Activated CD4-positive, alpha-beta T cell treated with anti-CD3 and anti-CD28 coated beads, Interleukin-2, amount 10 ng/mL, durations not matched to agents 24 days and 14 days (primary cell): ENCODE measurements at regions of chr6 and their contacts with region 1.

Region 1: GRCh38 chr6:42745707-42746462 is at the start of gene TBCC:
- DNase-seq: peak; percentile 97
- H3K4me3 Mint-ChIP-seq: peak within 1 kb of the TSS; percentile 92
- H3K27ac Mint-ChIP-seq: peak within 1 kb of the TSS; percentile 100
- H3K4me1 Mint-ChIP-seq: peaks cover 22% of the 10 kb centered on the region
- H3K27me3 Mint-ChIP-seq: no peaks in the 10 kb centered on the region
- total RNA-seq, gene TBCC: 18.4 TPM in 2 replicates

Region 2: GRCh38 chr6:42158011-42158410 is 587.9 kb before region 1 on chr6:
- intact Hi-C with region 1: no loop called
- DNase-seq: no peak
- H3K4me3 Mint-ChIP-seq: no peak overlapping the region
- H3K27ac Mint-ChIP-seq: no peak overlapping the region
- H3K4me1 Mint-ChIP-seq: no peaks in the 10 kb centered on the region
- H3K27me3 Mint-ChIP-seq: peaks cover 11% of the 10 kb centered on the region

Region 3: DNA sequence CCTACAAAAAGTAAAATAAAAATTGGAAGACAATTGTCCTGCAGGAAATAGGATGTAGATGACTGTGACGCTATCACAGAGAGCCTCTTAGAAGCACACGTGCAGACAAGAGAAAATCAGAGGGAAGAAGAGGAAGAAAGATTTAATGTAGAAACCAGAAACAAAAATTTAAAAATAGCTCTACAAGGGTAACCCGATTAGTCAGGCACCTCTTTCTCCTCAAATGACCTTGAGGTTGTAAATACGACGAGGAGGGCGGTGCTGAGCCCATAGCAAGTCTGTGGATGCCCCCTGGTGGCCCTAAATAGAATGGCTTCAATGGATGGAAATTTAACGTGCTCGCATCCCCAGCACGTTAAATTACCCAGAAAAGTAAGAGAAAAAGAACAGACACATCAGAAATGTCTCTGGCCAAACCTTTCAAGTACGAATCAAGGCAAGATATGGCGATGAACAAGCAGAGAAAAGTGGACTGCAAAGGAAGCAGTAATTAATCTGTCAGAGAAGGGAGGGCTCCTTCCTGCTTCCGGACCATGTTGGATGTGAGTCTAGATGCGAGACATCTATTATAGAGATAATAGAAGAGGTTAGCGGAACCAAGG is 19.3 kb before region 1 on chr6:
- intact Hi-C with region 1: loop called (anchors 1 kb)
- DNase-seq: peak; percentile 91
- H3K4me3 Mint-ChIP-seq: peak overlapping the region; percentile 84
- H3K27ac Mint-ChIP-seq: peak overlapping the region; percentile 97
- H3K4me1 Mint-ChIP-seq: peaks cover 14% of the 10 kb centered on the region
- H3K27me3 Mint-ChIP-seq: no peaks in the 10 kb centered on the region

Region 4: DNA sequence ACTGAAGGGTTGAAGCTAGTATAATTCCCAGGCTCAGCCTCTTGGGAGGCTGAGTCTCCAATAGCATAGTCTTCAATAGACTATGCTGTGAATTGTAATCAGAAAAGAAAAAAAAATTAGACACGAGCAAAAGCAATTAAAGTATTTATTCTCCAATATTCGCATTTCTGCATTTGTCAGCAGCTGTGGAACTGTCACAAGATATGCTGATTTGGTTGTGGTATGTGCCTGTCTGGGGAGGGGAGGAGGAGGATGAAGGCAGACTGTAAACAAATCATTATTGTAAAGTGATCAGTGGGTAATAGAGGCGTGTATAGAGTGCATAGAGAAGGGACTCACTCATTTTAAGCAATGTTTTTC is 25.8 kb after region 1 on chr6:
- intact Hi-C with region 1: loop called (anchors 1 kb)
- DNase-seq: peak; percentile 77
- H3K4me3 Mint-ChIP-seq: peak overlapping the region; percentile 83
- H3K27ac Mint-ChIP-seq: peak overlapping the region; percentile 99
- H3K4me1 Mint-ChIP-seq: peaks cover 55% of the 10 kb centered on the region
- H3K27me3 Mint-ChIP-seq: no peaks in the 10 kb centered on the region

Region 5: GRCh38 chr6:42782622-42783176 is 36.8 kb after region 1 on chr6:
- intact Hi-C with region 1: loop called (anchors 1 kb)
- DNase-seq: peak; percentile 88
- H3K4me3 Mint-ChIP-seq: peak overlapping the region; percentile 87
- H3K27ac Mint-ChIP-seq: peak overlapping the region; percentile 96
- H3K4me1 Mint-ChIP-seq: peaks cover 29% of the 10 kb centered on the region
- H3K27me3 Mint-ChIP-seq: no peaks in the 10 kb centered on the region

Region 6: DNA sequence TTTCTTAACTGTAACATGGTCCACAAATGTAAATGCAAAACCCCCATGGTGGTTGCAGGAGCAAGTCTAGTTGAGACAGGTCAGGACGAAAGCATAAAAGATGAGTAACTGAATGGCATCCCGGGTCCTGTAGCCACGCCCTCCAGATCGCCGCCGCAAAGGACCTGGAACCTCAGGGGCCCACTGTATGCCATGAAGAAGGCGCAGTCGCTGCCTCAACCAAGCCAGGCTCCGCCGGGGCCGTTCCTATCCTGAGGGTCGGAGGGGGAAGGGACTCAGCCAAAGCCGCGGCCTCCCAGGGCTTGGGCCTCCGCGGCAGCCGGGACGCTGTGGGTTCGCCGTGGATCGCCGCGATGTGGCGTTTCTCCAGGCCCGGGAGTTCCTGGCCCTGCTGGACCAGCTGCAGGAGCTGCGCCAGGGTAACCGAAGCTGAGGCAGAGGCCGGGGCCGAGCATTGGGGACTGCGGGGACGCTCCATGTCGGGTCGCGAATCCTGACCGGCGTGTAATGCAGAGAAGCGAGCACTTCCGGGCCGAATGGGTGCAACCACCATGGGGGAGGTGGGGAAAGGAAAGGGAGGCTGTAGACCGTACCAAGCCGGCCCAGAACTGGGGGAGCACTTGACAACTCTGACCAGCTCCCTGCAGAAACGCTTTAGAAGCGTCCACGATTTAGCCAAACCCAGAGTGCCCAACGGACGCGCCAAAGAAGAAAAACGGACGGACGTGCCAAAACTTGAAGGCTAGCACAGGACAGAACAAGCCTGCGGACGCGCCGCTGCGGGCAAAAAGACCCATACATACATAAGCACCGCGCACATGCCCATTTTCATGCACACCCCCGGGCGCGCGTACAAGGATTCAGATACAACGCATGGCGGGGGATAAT is 144.7 kb after region 1 on chr6:
- intact Hi-C with region 1: loop called (anchors 1 kb)
- DNase-seq: peak; percentile 97
- H3K4me3 Mint-ChIP-seq: peak overlapping the region; percentile 96
- H3K27ac Mint-ChIP-seq: peak overlapping the region; percentile 98
- H3K4me1 Mint-ChIP-seq: peaks cover 21% of the 10 kb centered on the region
- H3K27me3 Mint-ChIP-seq: no peaks in the 10 kb centered on the region

Region 7: GRCh38 chr6:42970871-42971612 is 225.2 kb after region 1 on chr6:
- intact Hi-C with region 1: no loop called
- DNase-seq: no peak
- H3K4me3 Mint-ChIP-seq: no peak overlapping the region
- H3K27ac Mint-ChIP-seq: no peak overlapping the region
- H3K4me1 Mint-ChIP-seq: peaks cover 9% of the 10 kb centered on the region
- H3K27me3 Mint-ChIP-seq: no peaks in the 10 kb centered on the region

Region 8: GRCh38 chr6:42984001-42984923 is 238.4 kb after region 1 on chr6 and contains the start of gene PPP2R5D:
- intact Hi-C with region 1: loop called (anchors 2 kb)
- DNase-seq: peak; percentile 99
- H3K4me3 Mint-ChIP-seq: peak within 1 kb of the TSS; percentile 98
- H3K27ac Mint-ChIP-seq: peak within 1 kb of the TSS; percentile 91
- H3K4me1 Mint-ChIP-seq: peaks cover 54% of the 10 kb centered on the region
- H3K27me3 Mint-ChIP-seq: no peaks in the 10 kb centered on the region
- total RNA-seq, gene PPP2R5D: 54.2 and 54.6 TPM in 2 replicates

Region 9: DNA sequence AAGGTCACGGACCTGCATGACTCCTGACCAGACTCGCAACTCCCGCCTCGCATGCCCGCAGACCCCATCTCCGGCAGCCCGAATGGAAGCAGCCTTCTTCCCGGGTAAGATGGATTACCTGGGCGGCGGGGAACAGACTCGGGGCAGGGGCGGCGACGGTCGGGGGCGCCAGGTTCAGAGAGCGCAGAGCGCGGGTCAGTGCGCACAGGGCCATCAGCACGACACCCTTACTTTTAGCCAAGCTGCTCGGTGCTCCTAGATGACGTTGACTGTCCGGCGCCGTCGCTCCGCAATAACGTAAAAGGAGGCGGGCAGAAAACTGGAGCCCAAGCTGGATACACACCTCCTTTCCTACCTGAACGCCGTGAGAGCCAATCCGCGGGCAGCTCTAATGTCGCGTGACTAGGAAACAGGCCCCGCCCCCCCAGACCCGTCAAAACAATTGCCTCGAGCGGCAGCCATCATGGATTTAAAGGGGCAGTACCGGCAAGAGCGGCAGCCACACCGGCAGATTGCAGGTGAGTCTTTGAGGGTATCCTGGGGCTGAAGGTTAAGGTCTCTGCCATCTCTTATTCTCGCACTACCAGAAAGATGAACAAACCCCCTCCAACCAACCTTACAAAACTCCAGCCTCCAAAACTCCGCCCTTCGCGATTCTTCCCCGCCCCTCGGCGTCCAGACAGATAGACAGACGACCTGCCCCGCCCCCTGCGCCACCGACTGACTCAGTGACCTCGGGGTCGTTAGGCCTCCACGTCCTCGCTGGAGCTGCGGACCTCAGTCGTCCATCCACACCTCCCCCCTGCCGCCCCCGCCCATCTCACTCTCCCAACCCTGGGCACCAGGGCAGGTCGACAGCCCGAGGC is 313.5 kb after region 1 on chr6 and contains the starts of genes KLC4 and MRPL2:
- intact Hi-C with region 1: loop called (anchors 1 kb)
- DNase-seq: peak; percentile 99
- H3K4me3 Mint-ChIP-seq: peak within 1 kb of the TSS; percentile 99
- H3K27ac Mint-ChIP-seq: peak within 1 kb of the TSS; percentile 98
- H3K4me1 Mint-ChIP-seq: peaks cover 35% of the 10 kb centered on the region
- H3K27me3 Mint-ChIP-seq: no peaks in the 10 kb centered on the region
- total RNA-seq, gene KLC4: 9.5 and 10.7 TPM in 2 replicates
- total RNA-seq, gene MRPL2: 83.8 and 103 TPM in 2 replicates